Heart left ventricle (tissue), 16 donors: ENCODE measurements at regions of chr9 and their contacts with region 1.

Region 1: DNA sequence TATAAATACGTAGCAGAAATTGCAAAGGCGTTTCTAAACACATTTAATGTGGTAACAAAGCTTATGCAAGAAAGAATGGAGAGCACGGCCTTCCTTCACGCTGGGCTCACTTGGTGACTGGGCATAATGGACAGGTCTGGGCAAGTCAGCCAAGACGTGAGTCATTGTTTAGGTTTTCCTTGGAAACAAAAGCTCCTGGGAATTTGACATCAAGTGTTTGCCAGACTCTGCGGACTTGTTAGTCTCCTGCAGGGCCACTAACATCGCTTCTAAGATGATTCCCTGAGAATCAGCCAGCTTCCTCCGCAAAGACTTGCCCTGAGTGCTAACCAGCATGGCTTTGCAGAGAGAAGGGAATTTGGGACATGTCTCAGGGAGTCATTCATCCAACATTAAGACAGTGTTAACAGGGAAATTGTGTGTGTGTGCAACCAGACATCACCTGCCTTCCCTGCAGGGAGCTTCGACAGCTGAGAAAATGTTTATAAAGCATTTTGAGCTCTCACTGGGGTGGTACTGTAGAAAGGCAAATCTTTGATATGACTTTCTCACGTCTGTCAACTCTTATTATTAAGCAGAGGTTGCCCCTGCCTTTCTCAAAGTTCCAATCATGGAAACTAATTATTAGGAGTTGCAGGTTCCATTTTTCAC is 182.5 kb downstream of the NTRK2 start:
- DNase-seq: peak in 4 of 5 donors; percentile 32 to 59 (median 36)
- ATAC-seq: peak; percentile 32 to 82 (median 67)
- H3K4me3 ChIP-seq: no peak overlapping the region
- H3K27ac ChIP-seq: peak overlapping the region in 2 of 12 donors; percentile 4 to 51
- H3K4me1 ChIP-seq: peaks cover 0 to 36% (median 17%) of the 10 kb centered on the region in 12 donors
- H3K27me3 ChIP-seq: no peaks in the 10 kb centered on the region
- CTCF ChIP-seq: no peak
- POLR2A ChIP-seq: no peak

Region 2: DNA sequence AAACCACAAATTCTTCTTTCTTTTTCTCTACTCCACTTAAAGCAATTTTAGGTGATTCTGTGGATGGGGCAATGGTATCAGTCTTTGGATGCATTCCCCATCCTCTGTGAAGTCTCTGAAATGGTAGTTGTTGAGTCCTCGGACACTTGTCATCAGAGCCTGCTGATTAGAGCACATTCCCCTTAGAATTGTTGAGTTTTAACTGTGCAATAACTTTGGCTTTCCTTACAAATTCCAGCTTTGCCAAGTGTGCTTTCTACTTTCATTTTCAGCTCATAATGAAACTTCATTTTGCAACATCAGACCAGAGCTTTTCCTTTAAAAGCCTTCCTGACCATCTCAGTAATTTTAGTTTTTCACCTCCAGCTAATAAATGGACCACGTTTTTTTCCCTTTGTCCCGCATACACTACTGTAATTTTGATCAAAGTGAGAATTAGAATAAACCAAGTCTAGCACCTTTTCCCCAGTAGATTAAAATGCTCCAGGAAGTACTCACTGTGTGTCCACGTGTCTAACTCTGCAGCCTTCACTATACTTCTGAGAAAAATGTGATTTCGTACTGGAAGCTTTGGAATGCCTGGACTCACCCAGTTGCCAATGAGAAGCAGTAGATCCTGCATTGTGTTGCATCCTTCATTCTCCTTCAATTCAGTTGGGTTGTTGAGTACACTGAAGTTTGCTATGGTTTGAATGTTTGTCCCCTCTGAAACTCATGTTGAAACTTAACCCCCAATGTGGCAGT is 46.9 kb before region 1 on chr9:
- intact Hi-C with region 1: loop called in 1 of 10 experiments (anchors 5 kb)
- DNase-seq: no peak
- ATAC-seq: no peak
- H3K4me3 ChIP-seq: peak overlapping the region in 3 of 12 donors; percentile 2 to 26 (median 4)
- H3K27ac ChIP-seq: peak overlapping the region in 2 of 12 donors; percentile 9 to 27
- H3K4me1 ChIP-seq: peaks cover 0 to 7% (median 0%) of the 10 kb centered on the region in 12 donors
- H3K27me3 ChIP-seq: no peaks in the 10 kb centered on the region
- CTCF ChIP-seq: no peak
- POLR2A ChIP-seq: no peak